ENCODE measurements at regions of chr7 and their contacts with region 1.

Region 1: GRCh38 chr7:116786791-116787443 is 75.5 kb upstream of the CAPZA2 start:
- DNase-seq: peak; percentile 46
- ATAC-seq: no peak
- H3K4me3 ChIP-seq: no peak overlapping the region
- H3K27ac ChIP-seq: no peak overlapping the region
- H3K4me1 ChIP-seq: peaks cover 4% of the 10 kb centered on the region
- H3K27me3 ChIP-seq: no peaks in the 10 kb centered on the region
- CTCF ChIP-seq: peak; percentile 46
- POLR2A ChIP-seq: no peak
- RAD21 ChIP-seq: peak; percentile 48; the same call in 1 of the 2 replicates

Region 2: DNA sequence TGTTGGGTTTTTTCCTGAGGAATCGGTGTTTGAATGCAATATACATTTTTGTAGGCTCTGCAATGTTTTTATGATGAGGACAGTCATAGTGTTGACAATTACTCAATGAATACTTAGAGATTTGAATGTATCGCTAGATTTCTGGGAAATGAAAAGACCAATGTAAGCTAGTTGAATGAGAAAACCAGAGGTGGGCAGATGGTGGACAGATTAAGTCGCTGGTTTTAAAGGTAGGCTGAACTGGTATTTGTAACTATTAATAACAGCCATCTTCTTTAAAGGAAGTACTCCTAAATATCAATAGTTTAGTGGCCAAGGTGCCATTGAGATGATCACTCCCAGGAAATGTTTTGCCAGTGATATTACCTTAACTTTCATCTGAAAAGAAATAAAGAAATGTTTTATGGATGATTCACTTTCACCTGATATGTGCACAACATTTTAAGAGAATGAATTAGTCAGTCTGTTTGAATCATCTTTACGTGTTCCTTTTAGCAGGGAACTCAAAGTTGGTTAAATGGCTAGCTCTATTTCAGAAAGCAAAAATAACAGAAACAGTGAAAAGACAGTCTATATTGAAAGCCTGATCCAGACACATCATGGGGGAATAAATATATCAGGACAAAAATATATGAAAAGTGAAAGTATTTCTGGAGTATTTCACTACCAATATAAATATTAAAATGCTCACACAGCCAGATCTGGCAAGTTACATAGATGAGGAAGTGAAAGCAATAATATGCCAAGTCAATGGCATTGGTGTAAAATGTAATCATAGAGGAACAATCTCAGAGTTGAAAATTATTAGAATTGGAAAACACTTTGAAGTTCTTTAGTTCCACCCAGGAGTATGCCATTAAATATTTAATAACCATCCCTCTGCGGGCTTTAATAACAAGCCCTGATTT is 94.3 kb before region 1 on chr7:
- CTCF ChIA-PET with region 1: no interaction called
- POLR2A ChIA-PET with region 1: no interaction called
- dilution Hi-C with region 1: no loop called
- in situ Hi-C with region 1: no loop called
- intact Hi-C with region 1: loop called (anchors 5 kb)
- DNase-seq: peak; percentile 65
- ATAC-seq: peak; percentile 40; the same call in 1 of the 2 replicates
- H3K4me3 ChIP-seq: no peak overlapping the region
- H3K27ac ChIP-seq: no peak overlapping the region; the same call in 1 of the 2 replicates
- H3K4me1 ChIP-seq: peaks cover 14% of the 10 kb centered on the region
- H3K27me3 ChIP-seq: no peaks in the 10 kb centered on the region
- CTCF ChIP-seq: no peak
- POLR2A ChIP-seq: no peak
- RAD21 ChIP-seq: no peak

Region 3: DNA sequence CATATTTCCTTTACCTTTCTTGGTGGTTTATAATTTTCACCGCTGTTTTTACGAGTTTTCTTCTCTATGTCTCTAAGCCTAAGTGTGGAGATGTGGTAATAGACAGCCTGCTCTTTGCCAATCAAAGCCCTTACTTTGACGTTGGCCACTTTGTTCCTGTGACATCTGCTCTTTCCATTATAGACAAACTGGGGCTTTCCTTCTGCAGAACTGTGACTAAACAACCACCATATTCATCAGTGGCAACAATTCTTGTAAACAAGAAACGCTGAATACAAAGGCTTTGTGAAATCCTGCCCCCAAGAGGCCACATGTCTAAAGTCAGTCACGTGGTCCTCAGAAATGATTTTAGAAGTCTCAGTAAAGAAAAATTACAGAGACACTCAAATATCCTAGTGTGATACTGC is 15.8 kb after region 1 on chr7:
- CTCF ChIA-PET with region 1: interaction called, 4 read pairs
- POLR2A ChIA-PET with region 1: no interaction called
- dilution Hi-C with region 1: no loop called
- in situ Hi-C with region 1: no loop called
- intact Hi-C with region 1: loop called (anchors 2 kb)
- DNase-seq: peak; percentile 80
- ATAC-seq: peak; percentile 52
- H3K4me3 ChIP-seq: no peak overlapping the region
- H3K27ac ChIP-seq: peak overlapping the region; percentile 64
- H3K4me1 ChIP-seq: peaks cover 17% of the 10 kb centered on the region
- H3K27me3 ChIP-seq: no peaks in the 10 kb centered on the region
- CTCF ChIP-seq: peak; percentile 61
- POLR2A ChIP-seq: no peak
- RAD21 ChIP-seq: peak; percentile 56

Measured in IMR-90 (cell line).